ENCODE measurements at regions of chr22 and their contacts with region 1.

Region 1: GRCh38 chr22:17368554-17369438 is 464 bp upstream of the CECR2 start:
- DNase-seq: peak; percentile 58 to 83 (median 82)
- ATAC-seq: peak; percentile 82 to 84
- H3K4me3 ChIP-seq: peak overlapping the region; percentile 80
- H3K27ac ChIP-seq: peak overlapping the region; percentile 85
- H3K4me1 ChIP-seq: no peaks in the 10 kb centered on the region
- H3K27me3 ChIP-seq: no peaks in the 10 kb centered on the region

Region 2: GRCh38 chr22:17492247-17492646 is 123.5 kb after region 1 on chr22:
- intact Hi-C with region 1: loop called in 1 of 4 experiments (anchors 5 kb)
- DNase-seq: no peak
- ATAC-seq: peak; percentile 51 to 87
- H3K4me3 ChIP-seq: no peak overlapping the region
- H3K27ac ChIP-seq: peak overlapping the region; percentile 78
- H3K4me1 ChIP-seq: peaks cover 2% of the 10 kb centered on the region
- H3K27me3 ChIP-seq: no peaks in the 10 kb centered on the region

Measured in right cardiac atrium (tissue), 5 donors.